Breast epithelium (tissue), 4 donors: ENCODE measurements at regions of chr16 and their contacts with region 1.

Region 1: GRCh38 chr16:26051063-26051462 is 359.3 kb downstream of the HS3ST4 start:
- DNase-seq: no peak
- H3K4me3 ChIP-seq: no peak overlapping the region
- H3K27ac ChIP-seq: no peak overlapping the region
- H3K4me1 ChIP-seq: no peaks in the 10 kb centered on the region
- H3K27me3 ChIP-seq: no peaks in the 10 kb centered on the region
- CTCF ChIP-seq: no peak
- POLR2A ChIP-seq: no peak

Region 2: GRCh38 chr16:24302631-24303030 is 1748.4 kb before region 1 on chr16:
- intact Hi-C with region 1: loop called (anchors 5 kb)
- DNase-seq: no peak
- H3K4me3 ChIP-seq: no peak overlapping the region
- H3K27ac ChIP-seq: no peak overlapping the region
- H3K4me1 ChIP-seq: no peaks in the 10 kb centered on the region
- H3K27me3 ChIP-seq: peaks cover 0 to 6% of the 10 kb centered on the region in 2 donors
- CTCF ChIP-seq: no peak
- POLR2A ChIP-seq: no peak

Region 3: DNA sequence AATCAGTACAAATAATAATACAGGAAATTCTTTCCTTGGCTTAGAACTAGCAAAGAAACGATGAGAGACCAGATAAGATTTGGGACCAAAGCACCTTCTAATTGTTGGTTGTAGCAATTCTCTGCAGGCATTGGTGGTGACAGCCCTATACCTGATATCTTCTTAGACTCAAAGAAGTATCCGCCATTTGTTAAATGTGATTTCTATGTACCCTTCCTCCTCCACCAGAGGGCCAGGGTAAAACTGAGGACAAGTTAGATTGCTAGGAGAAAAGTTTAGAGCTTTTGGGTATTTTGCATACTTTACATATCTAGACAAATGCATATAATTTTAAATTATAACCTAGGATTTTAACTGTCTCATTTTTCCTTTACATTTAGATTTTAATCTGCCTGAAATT is 55.0 kb before region 1 on chr16:
- intact Hi-C with region 1: no loop called
- DNase-seq: no peak
- H3K4me3 ChIP-seq: no peak overlapping the region
- H3K27ac ChIP-seq: no peak overlapping the region
- H3K4me1 ChIP-seq: no peaks in the 10 kb centered on the region
- H3K27me3 ChIP-seq: no peaks in the 10 kb centered on the region
- CTCF ChIP-seq: no peak
- POLR2A ChIP-seq: no peak